AG04449 (cell line): ENCODE measurements at regions of chr11 and their contacts with region 1.

Region 1: GRCh38 chr11:130861902-130862860 is 54.1 kb downstream of the SNX19 start:
- DNase-seq: peak; percentile 65
- H3K4me3 ChIP-seq: no peak overlapping the region
- CTCF ChIP-seq: peak; percentile 100

Region 2: DNA sequence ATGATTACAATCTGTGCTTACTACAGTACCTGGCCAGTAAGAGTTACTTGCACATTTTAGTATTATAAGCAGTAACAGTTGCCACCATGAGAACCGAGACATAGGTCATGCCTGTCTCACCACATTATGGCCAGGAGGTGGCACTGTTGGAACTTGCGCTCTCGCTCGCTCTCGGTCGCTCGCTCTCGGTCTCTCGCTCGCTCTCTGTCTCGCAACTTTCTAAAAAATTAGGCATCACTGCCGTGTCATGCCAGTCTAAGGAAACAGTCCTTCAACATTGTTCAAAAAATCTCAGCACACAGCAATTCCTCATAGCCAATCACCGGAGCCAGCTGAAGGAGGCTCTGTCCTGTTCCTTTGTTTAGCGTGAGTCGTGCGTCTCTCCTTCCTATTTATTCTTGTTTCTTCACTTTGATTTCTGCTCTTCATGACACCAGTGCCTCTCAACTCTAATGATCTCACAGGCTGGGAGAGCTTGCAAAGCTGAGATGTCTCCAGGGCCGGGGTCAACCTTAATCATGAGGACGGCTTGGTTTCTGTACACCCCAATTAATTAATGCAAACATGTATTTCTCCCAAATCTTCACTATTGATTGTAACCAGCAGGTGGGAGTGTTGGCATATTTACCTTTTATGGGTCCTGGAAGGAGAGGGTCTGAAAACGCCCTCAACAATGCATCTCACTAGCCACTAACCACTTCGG is 427.5 kb before region 1 on chr11:
- CTCF ChIA-PET with region 1: interaction called, 1,136 read pairs
- POLR2A ChIA-PET with region 1: interaction called, 3 read pairs
- DNase-seq: no peak
- H3K4me3 ChIP-seq: peak overlapping the region; percentile 65
- CTCF ChIP-seq: peak; percentile 89

Region 3: DNA sequence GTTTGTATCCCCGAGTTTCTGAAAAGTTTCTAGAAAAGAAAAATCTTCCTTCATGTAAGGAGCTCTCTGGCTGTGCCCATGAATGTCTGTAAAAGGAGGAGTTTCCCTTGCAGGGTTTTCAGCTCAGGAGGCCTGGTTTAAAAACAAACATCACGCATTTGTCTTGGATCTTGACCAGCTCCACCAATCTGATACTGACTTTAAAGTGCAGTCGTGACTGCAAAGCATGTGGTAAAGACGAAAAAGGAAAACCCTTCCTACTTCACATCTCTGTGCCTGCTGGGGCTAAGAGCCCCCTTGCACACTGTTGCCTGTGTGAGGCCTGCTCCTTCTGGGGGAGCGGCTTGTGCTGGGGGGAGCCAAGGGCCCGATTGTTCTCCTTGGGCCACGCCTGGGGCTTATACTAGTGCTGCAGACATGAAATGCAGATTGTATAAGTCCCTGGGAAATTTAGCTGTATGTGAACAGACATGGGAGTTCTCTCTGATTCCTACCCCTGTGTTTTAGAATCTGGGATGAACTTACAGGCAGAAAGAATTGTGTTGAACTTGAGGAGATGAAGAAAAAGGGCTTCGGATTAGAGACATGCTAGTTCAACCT is 351.7 kb before region 1 on chr11:
- CTCF ChIA-PET with region 1: interaction called, 11 read pairs
- POLR2A ChIA-PET with region 1: no interaction called
- DNase-seq: peak; percentile 37
- H3K4me3 ChIP-seq: no peak overlapping the region
- CTCF ChIP-seq: no peak

Region 4: DNA sequence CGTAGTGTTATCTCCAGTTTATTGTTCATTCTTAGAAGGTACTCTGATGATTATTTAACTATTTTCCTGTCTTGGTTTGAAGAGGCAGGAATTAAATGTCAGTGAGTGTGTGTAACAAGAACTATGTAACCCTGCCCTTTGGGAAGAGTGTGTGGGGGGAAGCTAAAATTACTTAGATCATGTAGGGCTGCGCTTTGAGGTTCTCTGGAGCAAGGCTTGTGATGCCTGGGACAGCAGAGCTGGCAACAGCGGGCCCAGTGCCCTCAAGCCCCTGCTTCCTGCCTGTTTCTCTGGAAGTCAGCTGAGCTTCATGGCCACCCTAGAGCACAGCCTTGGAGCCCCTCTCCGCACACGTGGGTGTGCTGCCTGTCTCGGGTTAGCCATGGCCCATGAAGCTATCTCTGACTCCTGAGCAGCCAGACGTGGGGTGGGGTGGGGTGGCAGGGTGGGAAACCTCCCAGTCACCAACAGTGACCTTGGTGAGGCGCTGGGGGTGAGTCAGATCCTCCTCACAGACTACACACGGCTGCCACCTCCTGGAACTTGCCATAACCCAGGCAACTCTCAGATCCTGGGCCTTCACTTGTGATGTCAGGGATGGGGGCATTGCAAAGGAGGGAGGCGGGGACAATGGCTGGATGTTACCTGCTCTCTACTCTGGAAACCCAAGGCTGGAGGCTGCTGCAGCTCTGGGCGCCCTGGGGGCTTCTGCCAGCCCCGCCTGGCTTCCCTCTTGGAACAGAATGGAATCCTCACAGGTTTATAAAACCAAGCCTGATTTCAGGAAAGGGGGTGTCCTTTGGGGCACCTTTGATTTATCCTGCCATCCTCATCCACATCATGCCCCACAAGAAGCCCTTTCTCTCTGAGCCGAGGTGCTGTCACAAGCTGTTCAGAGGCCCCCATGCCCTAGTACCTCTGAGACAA is 34.5 kb before region 1 on chr11:
- CTCF ChIA-PET with region 1: interaction called, 92 read pairs
- POLR2A ChIA-PET with region 1: no interaction called
- DNase-seq: no peak
- H3K4me3 ChIP-seq: no peak overlapping the region
- CTCF ChIP-seq: peak; percentile 81

Region 5: DNA sequence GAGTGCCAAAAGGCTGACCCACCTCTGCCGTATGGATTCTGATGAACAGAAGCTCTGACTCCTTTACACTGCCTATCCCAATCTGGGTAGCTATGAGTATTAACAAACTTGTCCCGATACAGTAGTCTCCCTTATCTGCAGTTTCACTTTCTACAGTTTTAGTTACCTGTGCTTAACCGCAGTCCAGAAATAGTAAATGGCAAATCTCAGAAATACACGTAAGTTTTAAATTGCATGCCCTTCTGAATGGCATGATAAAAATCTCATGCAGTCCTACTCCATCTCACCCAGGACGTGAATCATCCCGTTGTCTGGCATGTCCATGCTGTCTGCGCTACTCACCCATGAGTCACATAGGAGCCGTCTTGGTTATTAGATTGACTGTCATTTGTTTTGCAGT is 14.7 kb before region 1 on chr11:
- CTCF ChIA-PET with region 1: interaction called, 124 read pairs
- POLR2A ChIA-PET with region 1: no interaction called
- DNase-seq: peak; percentile 73
- H3K4me3 ChIP-seq: peak overlapping the region; percentile 23
- CTCF ChIP-seq: no peak

Region 6: DNA sequence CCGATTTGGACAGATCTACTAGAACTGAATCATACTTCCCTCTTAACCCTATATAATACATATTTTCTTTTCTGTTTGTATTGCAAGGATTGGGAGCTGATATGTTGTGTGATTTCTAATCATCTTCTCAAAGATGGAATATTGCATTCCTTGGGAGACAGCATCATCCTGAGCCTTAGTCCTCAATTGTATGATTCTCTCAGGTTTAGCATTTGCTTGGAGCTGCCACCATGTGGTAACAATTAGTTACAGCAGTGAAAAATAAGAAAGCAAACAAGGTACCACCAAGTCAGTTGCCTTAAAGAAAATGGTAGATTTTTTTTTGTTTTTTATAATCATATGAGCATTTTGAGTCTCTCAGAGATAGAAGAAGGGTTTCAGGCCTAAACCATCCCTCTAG is 42.2 kb after region 1 on chr11:
- CTCF ChIA-PET with region 1: interaction called, 290 read pairs
- POLR2A ChIA-PET with region 1: no interaction called
- DNase-seq: no peak
- H3K4me3 ChIP-seq: no peak overlapping the region
- CTCF ChIP-seq: peak; percentile 6